ENCODE measurements at regions of chr9 and their contacts with region 1.

Region 1: DNA sequence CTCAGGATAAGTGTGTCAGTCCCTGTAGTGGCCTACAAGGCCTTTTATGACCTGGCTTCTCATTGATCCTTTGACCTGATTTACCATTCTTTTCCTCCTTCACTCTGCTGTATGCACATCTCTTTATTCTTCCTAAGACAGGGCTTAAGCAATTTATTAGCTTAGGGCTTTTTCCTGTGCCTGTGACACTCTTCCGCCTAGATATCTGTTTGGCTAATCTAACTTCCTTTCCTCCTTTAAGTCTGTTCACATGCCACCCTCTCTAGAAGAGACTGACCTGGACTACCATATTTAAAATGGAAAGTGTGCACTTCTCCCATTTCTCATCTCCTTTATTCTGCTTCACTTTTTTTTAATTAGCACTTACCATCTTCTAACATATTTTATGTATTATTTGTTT is 29.1 kb downstream of the FOCAD start:
- DNase-seq: peak; percentile 75
- H3K4me3 ChIP-seq: no peak overlapping the region
- H3K27ac ChIP-seq: peak overlapping the region; percentile 98
- H3K4me1 ChIP-seq: peaks cover 53% of the 10 kb centered on the region
- H3K27me3 ChIP-seq: no peaks in the 10 kb centered on the region
- CTCF ChIP-seq: no peak

Region 2: GRCh38 chr9:19946441-19947109 is 766.6 kb before region 1 on chr9:
- CTCF ChIA-PET with region 1: no interaction called
- POLR2A ChIA-PET with region 1: no interaction called
- intact Hi-C with region 1: loop called (anchors 10 kb)
- DNase-seq: peak; percentile 57
- H3K4me3 ChIP-seq: no peak overlapping the region
- H3K27ac ChIP-seq: no peak overlapping the region
- H3K4me1 ChIP-seq: peaks cover 21% of the 10 kb centered on the region
- H3K27me3 ChIP-seq: no peaks in the 10 kb centered on the region
- CTCF ChIP-seq: peak; percentile 62

Region 3: DNA sequence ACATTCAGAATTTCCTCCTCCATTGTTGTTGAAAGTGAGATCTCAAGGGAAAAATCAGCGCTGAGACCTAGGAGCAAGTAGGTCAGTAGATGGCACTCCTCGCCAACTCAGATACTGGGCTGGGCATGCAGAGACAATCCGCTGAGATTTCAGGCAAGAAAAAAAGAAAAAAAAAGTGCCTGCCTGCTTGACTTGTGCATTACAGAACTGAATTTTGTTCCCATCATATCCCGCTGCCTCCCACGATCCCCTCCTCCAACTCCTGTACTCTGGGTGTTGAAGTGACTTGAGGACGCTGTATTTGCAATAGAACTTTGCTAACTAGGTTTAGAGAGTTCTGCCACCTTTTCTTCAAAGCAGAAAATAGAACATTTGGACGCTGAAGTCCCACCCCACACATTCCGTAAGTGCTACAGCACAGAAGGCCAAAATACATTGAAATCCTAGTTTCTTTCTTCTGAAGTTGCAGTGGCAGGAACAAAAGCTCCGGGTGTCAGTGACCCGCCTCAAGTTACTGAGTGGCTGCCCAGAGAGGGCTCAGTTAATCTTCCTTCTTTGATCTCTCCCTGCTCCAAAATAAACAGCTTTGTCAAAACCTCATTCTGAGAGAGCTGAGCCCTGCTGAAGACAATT is 356.7 kb before region 1 on chr9:
- CTCF ChIA-PET with region 1: no interaction called
- POLR2A ChIA-PET with region 1: no interaction called
- intact Hi-C with region 1: loop called (anchors 5 kb)
- DNase-seq: peak; percentile 84
- H3K4me3 ChIP-seq: no peak overlapping the region
- H3K27ac ChIP-seq: peak overlapping the region; percentile 53
- H3K4me1 ChIP-seq: peaks cover 52% of the 10 kb centered on the region
- H3K27me3 ChIP-seq: no peaks in the 10 kb centered on the region
- CTCF ChIP-seq: peak; percentile 68